Activated T-helper 2 cell treated with anti-CD3 and anti-CD28 coated beads, Interferon-gamma antibody, Interleukin-2, Interleukin-4, amounts not matched to agents 10 μg/mL and 5 μg/mL and 100 μg/mL, durations not matched to agents 14 hours and 24 hours and 36 hours (primary cell): ENCODE measurements at regions of chr12 and their contacts with region 1.

Region 1: GRCh38 chr12:57005980-57006808 is at the start of gene ZBTB39:
- DNase-seq: peak; percentile 60
- H3K4me3 Mint-ChIP-seq: peak within 1 kb of the TSS; percentile 95
- H3K27ac Mint-ChIP-seq: peak within 1 kb of the TSS; percentile 89
- H3K4me1 Mint-ChIP-seq: peaks cover 39% of the 10 kb centered on the region
- H3K27me3 Mint-ChIP-seq: no peaks in the 10 kb centered on the region
- total RNA-seq, gene ZBTB39: 10.5 and 10.6 TPM in 2 replicates

Region 2: GRCh38 chr12:56751712-56752598 is 254.2 kb before region 1 on chr12 and contains the start of gene PRIM1:
- intact Hi-C with region 1: loop called (anchors 1 kb)
- DNase-seq: peak; percentile 88
- H3K4me3 Mint-ChIP-seq: peak within 1 kb of the TSS; percentile 98
- H3K27ac Mint-ChIP-seq: peak within 1 kb of the TSS; percentile 99
- H3K4me1 Mint-ChIP-seq: peaks cover 39% of the 10 kb centered on the region
- H3K27me3 Mint-ChIP-seq: no peaks in the 10 kb centered on the region
- total RNA-seq, gene PRIM1: 59.4 and 63.9 TPM in 2 replicates